ENCODE measurements at regions of chr5 and their contacts with region 1.

Region 1: DNA sequence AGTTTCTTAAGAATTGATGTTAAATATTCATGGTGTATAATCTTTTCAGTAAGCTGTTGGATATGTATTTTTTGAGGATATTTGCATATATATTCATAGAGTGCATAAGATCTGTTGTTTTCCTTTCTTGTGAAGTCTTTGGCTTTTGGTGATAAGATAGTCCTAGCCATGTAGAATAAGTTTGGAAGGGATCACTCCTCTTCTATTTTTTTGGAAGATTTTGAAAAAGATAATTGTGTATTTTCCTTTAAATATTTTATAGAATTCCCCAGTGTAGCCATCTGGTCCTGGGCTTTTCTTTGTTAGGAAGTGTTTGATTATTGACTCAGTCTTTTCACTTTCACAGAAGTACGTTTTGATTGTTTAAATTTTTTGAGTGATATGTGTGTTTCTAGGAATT is 318.8 kb upstream of the CDH10 start:
- DNase-seq: no peak
- H3K4me3 ChIP-seq: no peak overlapping the region
- H3K27ac ChIP-seq: no peak overlapping the region
- H3K4me1 ChIP-seq: no peaks in the 10 kb centered on the region
- H3K27me3 ChIP-seq: no peaks in the 10 kb centered on the region
- CTCF ChIP-seq: no peak

Region 2: GRCh38 chr5:24703934-24704333 is 259.7 kb before region 1 on chr5:
- CTCF ChIA-PET with region 1: no interaction called
- POLR2A ChIA-PET with region 1: interaction called, 24 read pairs
- intact Hi-C with region 1: no loop called
- DNase-seq: no peak
- H3K4me3 ChIP-seq: no peak overlapping the region
- H3K27ac ChIP-seq: no peak overlapping the region
- H3K4me1 ChIP-seq: no peaks in the 10 kb centered on the region
- H3K27me3 ChIP-seq: no peaks in the 10 kb centered on the region
- CTCF ChIP-seq: no peak

Region 3: GRCh38 chr5:24998641-24999040 is 35.0 kb after region 1 on chr5:
- CTCF ChIA-PET with region 1: no interaction called
- POLR2A ChIA-PET with region 1: no interaction called
- intact Hi-C with region 1: no loop called
- DNase-seq: no peak
- H3K4me3 ChIP-seq: no peak overlapping the region
- H3K27ac ChIP-seq: no peak overlapping the region
- H3K4me1 ChIP-seq: no peaks in the 10 kb centered on the region
- H3K27me3 ChIP-seq: no peaks in the 10 kb centered on the region
- CTCF ChIP-seq: no peak

Region 4: GRCh38 chr5:25029004-25029403 is 65.4 kb after region 1 on chr5:
- CTCF ChIA-PET with region 1: no interaction called
- POLR2A ChIA-PET with region 1: no interaction called
- intact Hi-C with region 1: no loop called
- DNase-seq: no peak
- H3K4me3 ChIP-seq: no peak overlapping the region
- H3K27ac ChIP-seq: no peak overlapping the region
- H3K4me1 ChIP-seq: no peaks in the 10 kb centered on the region
- H3K27me3 ChIP-seq: no peaks in the 10 kb centered on the region
- CTCF ChIP-seq: no peak

Measured in PC-9 (cell line).